Caco-2 (cell line): ENCODE measurements at regions of chr11 and their contacts with region 1.

Region 1: DNA sequence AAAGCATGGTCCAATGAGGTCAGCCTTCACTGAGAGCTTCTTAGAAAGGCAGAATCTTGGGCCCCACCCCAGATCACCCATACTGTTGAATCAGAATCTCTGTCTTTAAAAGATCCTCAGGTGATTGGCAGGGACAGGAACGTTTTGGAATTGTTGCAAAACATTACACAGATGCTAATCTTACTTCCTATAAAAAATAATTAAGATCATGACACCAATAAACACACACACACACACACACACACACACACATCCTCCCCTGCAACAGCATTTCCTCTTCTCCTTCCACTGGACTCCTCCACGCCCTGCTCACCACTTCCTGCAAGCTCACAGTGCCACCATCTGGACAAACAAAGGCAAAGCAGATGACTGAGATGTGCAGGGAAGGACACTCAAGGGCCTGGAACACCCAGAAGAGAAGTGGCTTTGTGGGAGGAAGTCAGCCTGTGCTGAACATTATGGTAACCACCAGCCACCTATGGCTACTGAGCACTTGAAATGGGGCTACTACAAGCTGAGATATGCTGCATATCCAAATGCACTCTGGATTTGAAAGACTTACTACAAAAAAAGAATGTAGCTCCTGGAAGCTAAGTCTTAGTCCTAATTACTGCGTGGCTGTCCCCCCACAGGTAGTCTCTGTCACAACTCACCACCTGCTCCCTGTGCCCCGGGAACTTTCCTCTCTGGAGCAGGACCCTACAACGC is 65.6 kb downstream of the BTG4 start:
- DNase-seq: peak; percentile 91
- H3K4me3 ChIP-seq: no peak overlapping the region
- H3K4me3 Mint-ChIP-seq: no peak overlapping the region
- H3K27ac Mint-ChIP-seq: no peak overlapping the region
- H3K4me1 ChIP-seq: no peaks in the 10 kb centered on the region; the same call in 1 of the 2 replicates
- H3K4me1 Mint-ChIP-seq: no peaks in the 10 kb centered on the region
- H3K27me3 ChIP-seq: peaks cover 2% of the 10 kb centered on the region; the same call in 1 of the 2 replicates
- H3K27me3 Mint-ChIP-seq: peaks cover 2% of the 10 kb centered on the region
- CTCF ChIP-seq: peak; percentile 96 to 99

Region 2: DNA sequence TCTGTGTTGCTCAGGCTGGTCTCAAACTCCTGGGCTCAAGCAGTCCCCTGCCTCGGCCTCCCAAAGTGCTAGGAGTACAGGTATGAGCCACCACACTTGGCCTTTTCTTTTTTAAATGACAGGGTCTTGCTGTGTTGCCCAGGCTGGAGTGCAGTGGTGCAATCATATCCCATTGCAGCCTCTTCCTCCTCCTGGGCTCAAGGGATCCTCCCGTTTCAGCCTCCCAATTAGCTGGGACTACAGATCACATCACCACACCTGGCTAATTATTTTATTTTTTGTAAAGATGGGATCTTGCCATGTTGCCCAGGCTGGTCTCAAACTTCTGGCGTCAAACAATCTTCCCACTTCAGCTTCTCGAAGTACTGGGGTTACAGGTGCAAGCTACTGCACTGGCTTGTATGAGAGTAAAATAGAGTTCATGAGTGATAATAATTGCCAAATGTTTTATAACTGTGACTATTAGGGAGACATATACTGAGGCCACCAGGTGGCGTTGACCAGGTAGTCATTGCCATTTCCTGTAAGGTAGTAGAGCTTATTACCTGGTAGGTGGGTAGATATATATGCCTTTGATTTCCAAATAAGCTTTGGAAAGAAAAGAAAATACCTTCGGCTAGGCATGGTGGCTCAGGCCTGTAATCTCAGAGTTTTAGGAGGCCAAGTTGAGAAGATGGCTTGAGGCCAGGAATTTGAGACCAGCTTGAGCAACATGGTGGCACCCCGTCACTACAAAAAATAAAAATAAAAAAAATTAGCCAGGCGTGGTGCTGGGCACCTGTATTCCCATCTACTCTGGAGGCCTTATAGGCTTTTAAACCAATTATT is 1011.4 kb before region 1 on chr11:
- CTCF ChIA-PET with region 1: interaction called, 12 read pairs
- POLR2A ChIA-PET with region 1: no interaction called
- intact Hi-C with region 1: loop called (anchors 1 kb)
- DNase-seq: peak; percentile 58 to 64
- H3K4me3 ChIP-seq: no peak overlapping the region
- H3K4me3 Mint-ChIP-seq: no peak overlapping the region
- H3K27ac Mint-ChIP-seq: no peak overlapping the region
- H3K4me1 ChIP-seq: peaks cover 30% of the 10 kb centered on the region
- H3K4me1 Mint-ChIP-seq: peaks cover 33% of the 10 kb centered on the region
- H3K27me3 ChIP-seq: no peaks in the 10 kb centered on the region
- H3K27me3 Mint-ChIP-seq: no peaks in the 10 kb centered on the region
- CTCF ChIP-seq: peak; percentile 62 to 63

Region 3: DNA sequence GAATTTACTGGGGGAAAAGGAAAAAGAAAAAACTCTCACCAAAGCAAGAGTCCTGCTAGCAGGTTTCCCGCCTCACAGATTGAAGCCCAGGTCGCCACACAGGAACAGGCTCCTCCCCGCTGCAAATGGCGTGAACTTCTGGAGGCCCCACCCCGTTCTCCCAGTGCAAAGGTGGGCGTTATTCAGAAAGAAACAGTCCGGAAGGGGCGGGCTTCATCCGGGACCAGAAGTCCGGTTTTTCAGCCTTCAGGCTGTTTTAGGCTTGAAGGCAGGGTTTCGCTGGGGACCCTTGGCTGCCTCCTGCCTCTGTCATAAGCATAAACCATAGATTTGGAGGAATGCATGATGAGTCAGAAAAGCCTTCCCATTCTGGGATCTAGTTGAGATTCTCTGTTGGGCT is 349.4 kb before region 1 on chr11:
- CTCF ChIA-PET with region 1: no interaction called
- POLR2A ChIA-PET with region 1: no interaction called
- intact Hi-C with region 1: loop called (anchors 5 kb)
- DNase-seq: peak; percentile 76 to 83
- H3K4me3 ChIP-seq: peak overlapping the region; percentile 35
- H3K4me3 Mint-ChIP-seq: peak overlapping the region; percentile 68
- H3K27ac Mint-ChIP-seq: no peak overlapping the region
- H3K4me1 ChIP-seq: no peaks in the 10 kb centered on the region
- H3K4me1 Mint-ChIP-seq: no peaks in the 10 kb centered on the region
- H3K27me3 ChIP-seq: no peaks in the 10 kb centered on the region
- H3K27me3 Mint-ChIP-seq: peaks cover 6% of the 10 kb centered on the region
- CTCF ChIP-seq: no peak

Region 4: GRCh38 chr11:111598559-111598958 is 152.0 kb after region 1 on chr11:
- CTCF ChIA-PET with region 1: no interaction called
- POLR2A ChIA-PET with region 1: no interaction called
- intact Hi-C with region 1: no loop called
- DNase-seq: no peak
- H3K4me3 ChIP-seq: no peak overlapping the region
- H3K4me3 Mint-ChIP-seq: no peak overlapping the region
- H3K27ac Mint-ChIP-seq: no peak overlapping the region
- H3K4me1 ChIP-seq: peaks cover 2% of the 10 kb centered on the region
- H3K4me1 Mint-ChIP-seq: peaks cover 4% of the 10 kb centered on the region
- H3K27me3 ChIP-seq: no peaks in the 10 kb centered on the region
- H3K27me3 Mint-ChIP-seq: peaks cover 5% of the 10 kb centered on the region
- CTCF ChIP-seq: no peak